HEK293T (cell line): ENCODE measurements at regions of chr15 and their contacts with region 1.

Region 1: DNA sequence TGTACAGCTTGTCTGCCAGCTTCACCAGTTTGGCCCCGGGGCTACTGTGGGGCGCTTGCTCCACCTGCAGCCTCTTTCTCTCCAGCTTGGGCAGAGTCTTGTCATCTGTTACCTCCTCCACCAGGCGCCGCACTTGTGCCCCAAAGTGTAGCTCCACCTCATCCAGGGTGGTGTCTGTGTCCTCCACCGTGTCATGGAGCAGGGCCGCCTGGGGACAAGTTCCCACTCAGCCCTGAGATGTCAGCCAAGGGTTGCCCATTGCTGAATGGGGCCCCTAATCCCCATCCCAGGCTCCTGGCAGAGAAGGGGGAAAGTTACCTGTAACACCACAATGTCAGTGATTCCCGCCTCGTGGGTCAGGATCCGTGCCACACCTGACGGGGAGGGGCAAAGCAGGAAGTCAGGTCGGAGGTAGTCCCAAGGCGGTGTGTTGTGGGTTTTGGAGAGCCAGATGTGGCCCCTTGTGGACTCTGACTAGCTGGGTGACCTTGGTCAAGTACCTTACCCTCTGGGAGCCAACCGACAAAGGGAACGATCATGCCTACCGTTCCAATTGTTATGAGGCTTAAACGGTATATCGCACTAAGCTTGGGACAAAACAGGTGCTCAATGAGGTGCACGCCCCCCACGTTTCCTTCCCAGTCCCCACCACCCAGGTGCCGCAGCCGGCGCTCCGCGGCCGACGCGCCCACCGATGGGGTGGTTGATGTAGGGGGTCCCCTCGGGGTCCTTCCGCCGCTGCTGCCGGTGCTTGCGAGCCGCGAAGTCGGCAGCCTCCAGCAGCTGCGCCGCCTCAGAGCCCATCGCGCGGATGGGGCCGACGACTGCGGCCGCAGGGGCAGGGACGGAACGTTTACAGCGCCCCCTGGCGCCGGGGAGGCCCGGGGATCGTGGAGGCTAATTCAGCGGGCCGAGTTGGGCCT is at the start of gene HDDC3:
- DNase-seq: peak; percentile 90

Region 2: GRCh38 chr15:89963301-89964231 is 968.4 kb before region 1 on chr15:
- CTCF ChIA-PET with region 1: interaction called, 12 read pairs
- POLR2A ChIA-PET with region 1: no interaction called
- DNase-seq: no peak

Region 3: DNA sequence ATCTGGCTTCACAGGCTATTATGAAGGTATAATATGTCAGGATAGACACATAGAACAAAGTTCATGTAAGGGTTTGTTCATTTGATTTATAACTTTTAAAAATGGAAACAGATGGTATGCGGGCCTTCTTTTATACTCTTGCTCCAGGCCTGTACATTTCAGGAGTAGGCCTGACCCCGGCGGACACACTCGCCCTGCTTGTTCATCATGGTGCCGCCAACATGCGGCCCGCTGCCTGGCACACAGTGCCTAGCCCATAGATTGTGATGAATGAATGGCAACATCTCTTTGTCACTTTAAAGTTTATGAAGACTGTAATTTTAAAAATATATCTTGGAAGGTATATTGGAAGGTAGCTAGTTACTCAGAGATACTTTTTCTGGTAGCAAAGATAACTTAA is 307.0 kb before region 1 on chr15:
- CTCF ChIA-PET with region 1: no interaction called
- POLR2A ChIA-PET with region 1: no interaction called
- DNase-seq: no peak

Region 4: DNA sequence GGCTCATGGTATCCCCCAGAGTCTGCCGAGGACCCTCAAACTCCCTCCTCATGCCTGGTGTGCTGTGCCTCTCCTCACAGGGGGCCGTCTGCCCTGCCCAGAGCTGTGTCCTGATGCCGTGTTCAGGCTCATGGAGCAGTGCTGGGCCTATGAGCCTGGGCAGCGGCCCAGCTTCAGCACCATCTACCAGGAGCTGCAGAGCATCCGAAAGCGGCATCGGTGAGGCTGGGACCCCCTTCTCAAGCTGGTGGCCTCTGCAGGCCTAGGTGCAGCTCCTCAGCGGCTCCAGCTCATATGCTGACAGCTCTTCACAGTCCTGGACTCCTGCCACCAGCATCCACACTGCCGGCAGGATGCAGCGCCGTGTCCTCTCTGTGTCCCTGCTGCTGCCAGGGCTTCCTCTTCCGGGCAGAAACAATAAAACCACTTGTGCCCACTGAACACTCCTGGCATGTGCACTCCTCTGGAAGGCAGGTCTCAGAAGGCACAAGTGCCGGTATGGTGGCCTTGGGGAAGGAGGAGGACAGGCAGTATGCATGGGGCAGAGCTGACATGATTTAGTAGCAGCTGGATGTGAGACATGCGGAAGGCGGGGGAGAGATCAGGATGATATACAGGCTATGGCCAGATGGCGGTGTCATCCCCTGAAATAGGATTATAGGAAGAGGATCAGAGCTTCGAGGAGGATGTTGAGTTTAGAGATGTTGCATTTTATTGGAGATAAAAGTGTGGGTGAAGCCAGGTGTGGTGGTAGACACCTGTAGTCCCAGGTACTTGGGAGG is 36.5 kb before region 1 on chr15:
- CTCF ChIA-PET with region 1: interaction called, 57 read pairs
- POLR2A ChIA-PET with region 1: interaction called, 142 read pairs
- DNase-seq: peak; percentile 37

Region 5: GRCh38 chr15:90946538-90946937 is 14.5 kb after region 1 on chr15:
- CTCF ChIA-PET with region 1: interaction called, 26 read pairs
- POLR2A ChIA-PET with region 1: interaction called, 22 read pairs
- DNase-seq: no peak

Region 6: DNA sequence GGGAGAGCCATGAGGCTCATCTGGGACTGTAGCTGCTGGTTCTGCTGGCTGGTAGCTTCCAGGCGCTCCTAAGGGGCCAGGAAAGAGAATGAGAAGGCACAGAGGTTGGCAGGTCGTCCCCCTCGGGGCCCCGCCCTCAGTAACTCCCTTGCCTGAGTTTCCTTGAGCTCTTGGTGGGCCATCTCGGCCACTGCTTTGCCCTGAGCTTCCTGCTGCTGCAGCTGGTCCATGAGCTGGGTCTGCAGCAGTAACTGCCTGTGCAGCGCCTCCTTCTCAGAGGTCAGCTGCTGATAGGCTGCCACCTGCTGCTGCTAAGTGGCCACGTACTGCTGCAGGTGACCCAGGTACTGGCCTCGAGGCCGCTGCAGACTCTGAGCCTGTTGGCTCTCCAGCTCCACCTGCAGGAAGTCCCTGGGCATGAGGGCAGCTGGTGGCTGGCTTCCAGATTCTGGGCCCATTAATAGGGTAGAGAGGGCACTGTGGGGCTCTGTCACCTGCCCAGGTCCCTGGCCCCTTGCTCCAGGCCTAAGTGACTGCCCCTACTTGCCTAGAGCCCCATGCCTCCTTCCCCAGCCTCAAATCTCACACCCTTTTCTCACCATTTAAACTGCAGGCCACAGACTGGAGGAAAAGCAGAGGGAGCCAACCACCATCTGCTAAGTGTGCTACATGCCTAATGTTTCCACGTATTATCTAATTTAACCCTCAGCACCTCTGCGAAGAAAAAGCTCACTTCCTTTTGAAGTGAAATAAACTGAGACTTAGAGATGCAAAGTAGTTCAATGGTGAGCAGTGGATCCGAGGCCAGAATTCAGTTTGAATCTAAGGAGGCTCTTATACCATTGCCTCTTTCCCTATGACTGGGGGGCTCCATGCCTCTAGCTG is 101.2 kb after region 1 on chr15:
- CTCF ChIA-PET with region 1: interaction called, 16 read pairs
- POLR2A ChIA-PET with region 1: interaction called, 3 read pairs
- DNase-seq: peak; percentile 48